PC-9 (cell line): ENCODE measurements at regions of chr17 and their contacts with region 1.

Region 1: GRCh38 chr17:40362696-40363110 is 1.8 kb downstream of the GJD3 start:
- DNase-seq: peak; percentile 72 to 82
- H3K4me3 ChIP-seq: peak overlapping the region; percentile 69; the same call in 1 of the 2 replicates
- H3K27ac ChIP-seq: no peak overlapping the region
- H3K4me1 ChIP-seq: peaks cover 8% of the 10 kb centered on the region
- H3K27me3 ChIP-seq: no peaks in the 10 kb centered on the region
- CTCF ChIP-seq: peak; percentile 70

Region 2: GRCh38 chr17:40531051-40531991 is 168.6 kb after region 1 on chr17:
- CTCF ChIA-PET with region 1: interaction called, 6 read pairs
- POLR2A ChIA-PET with region 1: interaction called, 3 read pairs
- intact Hi-C with region 1: loop called (anchors 2 kb)
- DNase-seq: no peak
- H3K4me3 ChIP-seq: no peak overlapping the region
- H3K27ac ChIP-seq: no peak overlapping the region
- H3K4me1 ChIP-seq: peaks cover 35% of the 10 kb centered on the region
- H3K27me3 ChIP-seq: no peaks in the 10 kb centered on the region
- CTCF ChIP-seq: no peak

Region 3: DNA sequence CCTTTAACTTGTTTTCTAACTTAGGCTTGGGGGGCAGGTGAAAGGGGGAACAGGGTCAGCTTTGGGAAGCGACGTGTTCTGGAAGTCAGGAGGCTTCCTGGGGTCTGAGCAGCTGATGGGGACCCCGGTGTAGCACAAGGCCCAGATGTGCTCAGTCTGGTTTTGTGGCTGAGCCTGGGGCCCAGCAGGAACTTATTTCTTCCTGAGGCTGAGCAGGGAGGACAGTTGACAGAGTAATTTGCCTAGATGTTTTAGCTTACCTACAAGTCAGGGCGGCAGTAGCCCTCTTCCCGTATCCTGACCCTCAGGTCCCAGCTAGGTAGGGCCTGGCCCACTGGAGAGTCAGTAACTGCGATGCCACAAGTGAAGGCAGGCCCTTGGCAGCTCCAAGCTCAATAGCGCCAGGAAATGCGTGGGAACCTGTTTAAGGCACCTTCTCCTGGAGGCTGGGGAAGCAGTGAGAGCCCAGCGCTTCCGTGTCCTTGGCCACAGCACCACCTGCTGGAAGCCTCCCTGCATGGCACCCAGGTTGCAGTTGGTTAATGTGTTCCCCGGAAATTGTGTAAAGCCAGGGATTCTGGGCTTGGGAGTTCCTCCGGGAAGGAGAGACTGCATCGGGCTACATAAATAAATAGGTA is 197.4 kb after region 1 on chr17:
- CTCF ChIA-PET with region 1: interaction called, 6 read pairs
- POLR2A ChIA-PET with region 1: no interaction called
- intact Hi-C with region 1: loop called (anchors 1 kb)
- DNase-seq: peak; percentile 79 to 91
- H3K4me3 ChIP-seq: no peak overlapping the region
- H3K27ac ChIP-seq: no peak overlapping the region
- H3K4me1 ChIP-seq: peaks cover 4% of the 10 kb centered on the region; the same call in 1 of the 2 replicates
- H3K27me3 ChIP-seq: peaks cover 19% of the 10 kb centered on the region
- CTCF ChIP-seq: peak; percentile 95

Region 4: DNA sequence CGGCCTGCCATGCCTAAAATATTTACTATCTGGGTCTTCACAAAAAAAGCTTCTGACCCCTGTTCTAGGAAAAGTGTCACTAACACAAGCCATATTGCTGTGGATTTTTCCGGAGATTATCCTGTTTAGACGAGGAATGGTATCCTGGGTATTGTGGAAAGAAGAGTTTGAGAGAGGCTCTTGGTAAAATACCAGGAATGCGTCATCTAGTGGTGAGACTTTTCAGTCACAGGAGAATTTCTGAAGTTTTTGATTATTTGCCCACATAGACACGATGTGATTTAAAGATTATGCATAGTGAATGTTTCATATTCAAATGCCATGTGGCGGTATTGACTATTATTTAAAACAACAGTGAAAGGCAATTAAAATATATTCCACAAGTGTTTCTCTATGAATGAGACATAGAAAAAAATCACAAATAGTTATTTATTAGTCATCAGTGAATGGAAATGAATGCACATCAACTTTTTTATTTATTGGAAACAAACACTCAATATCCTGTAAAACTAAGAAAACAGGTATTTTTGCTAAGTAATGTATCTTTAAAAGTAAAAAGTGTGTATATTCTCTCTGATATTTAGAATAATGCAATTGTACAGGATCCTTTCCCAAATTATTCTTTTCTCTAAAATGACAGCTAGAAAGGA is 429.2 kb after region 1 on chr17:
- CTCF ChIA-PET with region 1: no interaction called
- POLR2A ChIA-PET with region 1: no interaction called
- intact Hi-C with region 1: loop called (anchors 2 kb)
- DNase-seq: no peak
- H3K4me3 ChIP-seq: no peak overlapping the region
- H3K27ac ChIP-seq: no peak overlapping the region
- H3K4me1 ChIP-seq: no peaks in the 10 kb centered on the region
- H3K27me3 ChIP-seq: no peaks in the 10 kb centered on the region
- CTCF ChIP-seq: peak; percentile 70